Endothelial cell of umbilical vein (primary cell): ENCODE measurements at regions of chr12 and their contacts with region 1.

Region 1: DNA sequence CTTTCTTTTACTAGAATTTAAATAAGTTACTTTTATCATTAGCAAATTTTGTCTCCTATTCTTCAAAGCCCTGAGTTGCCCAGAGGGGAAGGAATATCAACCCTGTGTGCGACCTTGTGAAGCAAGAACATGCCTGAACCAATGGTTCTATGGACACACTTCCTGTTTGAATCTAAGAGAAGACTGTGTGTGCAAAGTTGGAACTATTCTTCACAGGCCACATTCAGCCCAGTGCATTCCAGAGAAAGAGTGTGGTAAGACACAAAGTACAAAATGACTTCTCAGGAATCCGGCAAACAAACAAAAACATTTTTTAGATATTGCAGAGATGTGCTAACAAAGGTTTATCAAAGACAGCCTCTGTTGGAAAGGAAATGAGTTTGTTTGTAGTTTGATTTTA is 90.8 kb upstream of the PTPRQ start:
- DNase-seq: peak; percentile 49
- H3K4me3 ChIP-seq: no peak overlapping the region
- H3K27ac ChIP-seq: peak overlapping the region; percentile 58
- H3K4me1 ChIP-seq: peaks cover 51% of the 10 kb centered on the region
- H3K27me3 ChIP-seq: no peaks in the 10 kb centered on the region
- CTCF ChIP-seq: no peak
- POLR2A ChIP-seq: no peak

Region 2: DNA sequence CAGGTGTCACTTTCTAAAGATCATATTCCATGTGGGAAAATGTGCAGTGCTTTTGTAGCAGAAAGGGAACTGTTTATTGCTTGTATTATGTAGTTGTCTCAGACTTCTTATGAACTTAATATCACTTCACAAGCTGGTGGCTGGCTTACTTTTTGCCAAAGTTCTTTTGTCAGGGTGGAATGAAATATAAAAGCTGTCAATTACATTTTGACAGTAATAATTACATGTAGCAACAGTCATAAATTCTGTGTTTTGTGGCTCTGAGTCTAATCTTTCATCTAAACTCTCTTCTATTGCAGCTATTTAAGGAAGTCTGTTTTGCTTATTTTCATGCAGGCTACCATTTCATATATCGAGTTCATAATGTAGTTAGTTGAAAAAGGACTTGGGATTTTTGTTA is 147.3 kb before region 1 on chr12:
- CTCF ChIA-PET with region 1: no interaction called
- POLR2A ChIA-PET with region 1: no interaction called
- dilution Hi-C with region 1: no loop called
- intact Hi-C with region 1: no loop called
- DNase-seq: no peak
- H3K4me3 ChIP-seq: no peak overlapping the region
- H3K27ac ChIP-seq: no peak overlapping the region
- H3K4me1 ChIP-seq: no peaks in the 10 kb centered on the region
- H3K27me3 ChIP-seq: no peaks in the 10 kb centered on the region
- CTCF ChIP-seq: no peak
- POLR2A ChIP-seq: no peak

Region 3: DNA sequence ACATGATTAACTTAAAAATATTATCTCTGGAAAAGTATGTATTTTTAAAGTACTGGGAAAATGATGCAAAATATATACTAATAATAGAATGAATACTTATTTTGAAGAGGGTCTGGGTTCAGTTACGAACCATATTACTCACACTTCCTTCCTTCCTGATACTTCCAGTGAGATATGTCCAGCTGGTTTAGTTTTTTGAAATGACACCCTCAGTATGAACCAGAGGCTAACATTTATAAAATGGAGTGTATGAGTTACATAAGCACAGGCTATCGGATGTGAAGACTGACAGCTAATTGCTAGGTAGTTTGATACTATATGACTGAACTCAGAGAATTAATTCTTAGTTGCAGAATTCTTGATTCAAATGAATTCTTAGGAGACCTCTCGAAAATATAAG is 131.0 kb before region 1 on chr12:
- CTCF ChIA-PET with region 1: no interaction called
- POLR2A ChIA-PET with region 1: no interaction called
- dilution Hi-C with region 1: no loop called
- intact Hi-C with region 1: loop called (anchors 2 kb)
- DNase-seq: peak; percentile 90
- H3K4me3 ChIP-seq: peak overlapping the region in 1 of 3 experiments; percentile 26
- H3K27ac ChIP-seq: peak overlapping the region; percentile 94
- H3K4me1 ChIP-seq: peaks cover 40% of the 10 kb centered on the region
- H3K27me3 ChIP-seq: no peaks in the 10 kb centered on the region
- CTCF ChIP-seq: no peak
- POLR2A ChIP-seq: peak; percentile 21